ENCODE measurements at regions of chr1 and their contacts with region 1.

Region 1: GRCh38 chr1:35769759-35770446 is at the start of gene CLSPN:
- DNase-seq: peak; percentile 97
- H3K4me3 ChIP-seq: peak within 1 kb of the TSS; percentile 39 to 71 (median 51)
- H3K27ac ChIP-seq: peak within 1 kb of the TSS; percentile 76
- H3K4me1 ChIP-seq: peaks cover 6% of the 10 kb centered on the region
- H3K27me3 ChIP-seq: no peaks in the 10 kb centered on the region
- CTCF ChIP-seq: no peak
- POLR2A ChIP-seq: peak; percentile 74
- total RNA-seq, gene CLSPN: 33.2 and 39.5 TPM in 2 replicates

Region 2: DNA sequence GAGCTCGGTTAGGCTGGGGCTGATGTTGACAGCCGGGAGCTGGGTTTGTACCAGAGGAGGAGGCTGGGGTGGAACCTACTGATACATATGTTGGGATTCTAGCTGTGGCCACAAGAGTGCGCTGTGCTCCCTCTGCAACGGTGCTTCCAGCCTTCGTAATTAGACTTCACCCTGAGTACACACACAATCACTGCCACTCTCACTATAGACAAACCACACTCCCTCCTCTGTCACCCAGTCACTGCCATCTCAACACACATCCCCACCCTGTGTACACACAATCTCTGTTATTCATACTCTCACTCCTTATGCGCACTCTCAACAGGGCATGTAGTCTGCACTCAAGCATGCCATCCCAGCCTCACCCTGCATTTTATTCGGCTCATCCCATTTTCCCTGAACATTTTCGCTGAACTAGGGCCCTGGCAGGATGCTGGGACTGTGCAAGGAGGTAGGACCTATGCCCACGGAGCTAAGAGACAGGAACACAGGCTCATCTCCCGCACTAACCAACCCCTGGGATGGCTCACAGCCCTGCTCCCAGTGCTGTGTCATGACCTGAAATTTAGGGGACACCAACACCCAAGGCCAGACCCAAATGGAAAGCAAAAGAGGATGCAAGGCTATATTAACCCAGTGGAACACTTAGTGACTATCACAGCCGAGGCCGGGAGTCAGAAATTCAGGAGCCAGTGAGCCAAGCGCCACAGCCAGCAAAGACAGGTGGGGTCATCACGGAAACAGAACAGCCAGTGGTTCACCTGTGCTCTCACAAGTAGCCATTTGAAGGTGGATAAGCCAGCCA is 983.2 kb before region 1 on chr1:
- CTCF ChIA-PET with region 1: no interaction called
- POLR2A ChIA-PET with region 1: no interaction called
- dilution Hi-C with region 1: no loop called
- intact Hi-C with region 1: loop called (anchors 5 kb)
- DNase-seq: peak; percentile 79
- H3K4me3 ChIP-seq: no peak overlapping the region
- H3K27ac ChIP-seq: no peak overlapping the region
- H3K4me1 ChIP-seq: no peaks in the 10 kb centered on the region
- H3K27me3 ChIP-seq: peaks cover 18 to 19% of the 10 kb centered on the region in 2 experiments
- CTCF ChIP-seq: peak; percentile 74 to 89
- POLR2A ChIP-seq: no peak

Region 3: DNA sequence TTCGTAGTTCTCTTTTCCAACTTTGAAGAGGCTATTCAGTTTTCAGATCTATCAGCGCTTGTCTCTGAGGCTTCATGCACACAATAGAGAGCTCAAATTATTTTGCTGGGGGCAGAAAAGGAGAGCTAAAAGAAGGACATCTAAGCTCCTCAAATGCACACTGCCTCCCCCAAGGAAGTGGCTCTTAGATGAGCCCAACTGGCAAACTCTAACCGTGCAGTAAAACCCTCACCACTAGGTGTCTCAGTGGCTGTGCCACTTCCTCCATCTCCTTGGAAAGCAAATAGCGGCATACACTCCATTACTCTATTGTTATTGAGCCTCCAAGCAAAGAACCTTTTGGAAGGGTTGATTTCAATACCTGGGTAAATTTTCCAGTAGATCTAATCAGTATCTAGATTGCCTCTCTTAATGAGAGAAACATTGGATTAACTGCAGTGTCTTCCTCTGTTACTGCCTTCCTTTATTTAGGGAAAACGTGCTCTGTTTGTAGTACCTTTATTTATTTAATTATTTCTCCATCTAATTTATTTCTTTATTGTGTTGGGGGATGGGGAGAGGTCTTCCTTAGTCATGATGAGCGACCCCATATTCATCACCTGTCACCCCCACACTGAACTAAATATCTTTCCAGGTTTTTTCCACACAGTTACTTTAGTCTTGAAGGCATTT is 567.7 kb before region 1 on chr1:
- CTCF ChIA-PET with region 1: interaction called, 4 read pairs
- POLR2A ChIA-PET with region 1: no interaction called
- dilution Hi-C with region 1: no loop called
- intact Hi-C with region 1: loop called (anchors 10 kb)
- DNase-seq: peak; percentile 90
- H3K4me3 ChIP-seq: no peak overlapping the region
- H3K27ac ChIP-seq: no peak overlapping the region
- H3K4me1 ChIP-seq: no peaks in the 10 kb centered on the region
- H3K27me3 ChIP-seq: peaks cover 0 to 2% of the 10 kb centered on the region in 2 experiments
- CTCF ChIP-seq: peak; percentile 83 to 86
- POLR2A ChIP-seq: no peak

Region 4: GRCh38 chr1:35577071-35577998 is 192.6 kb before region 1 on chr1:
- CTCF ChIA-PET with region 1: interaction called, 17 read pairs
- POLR2A ChIA-PET with region 1: no interaction called
- dilution Hi-C with region 1: no loop called
- intact Hi-C with region 1: loop called (anchors 1 kb)
- DNase-seq: peak; percentile 37
- H3K4me3 ChIP-seq: peak overlapping the region in 1 of 3 experiments; percentile 9
- H3K27ac ChIP-seq: no peak overlapping the region
- H3K4me1 ChIP-seq: peaks cover 9% of the 10 kb centered on the region
- H3K27me3 ChIP-seq: peaks cover 30 to 52% of the 10 kb centered on the region in 2 experiments
- CTCF ChIP-seq: no peak
- POLR2A ChIP-seq: no peak

Region 5: DNA sequence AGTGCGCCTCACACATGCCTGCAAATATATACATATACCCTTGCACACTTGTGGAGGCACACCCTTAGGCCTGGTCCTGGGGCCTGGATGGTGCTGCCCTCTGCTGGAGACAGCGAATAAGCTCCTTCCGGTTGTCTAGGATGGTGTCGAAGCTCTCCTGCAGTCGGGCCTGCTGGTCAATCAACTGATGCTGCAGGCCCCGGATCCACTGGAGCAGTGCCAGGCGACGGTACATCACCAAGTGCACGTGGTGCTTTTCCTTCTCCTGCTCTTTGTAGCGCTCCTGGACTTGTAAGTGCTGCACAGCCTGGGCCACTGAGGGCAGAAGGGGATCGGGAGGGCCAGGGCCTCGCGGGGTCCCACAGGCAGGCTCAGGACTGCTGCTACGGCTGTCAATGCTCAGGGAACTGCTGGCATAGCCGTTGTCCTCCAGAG is 54.3 kb before region 1 on chr1:
- CTCF ChIA-PET with region 1: interaction called, 21 read pairs
- POLR2A ChIA-PET with region 1: no interaction called
- dilution Hi-C with region 1: no loop called
- intact Hi-C with region 1: no loop called
- DNase-seq: peak; percentile 65
- H3K4me3 ChIP-seq: no peak overlapping the region
- H3K27ac ChIP-seq: no peak overlapping the region
- H3K4me1 ChIP-seq: peaks cover 13% of the 10 kb centered on the region
- H3K27me3 ChIP-seq: no peaks in the 10 kb centered on the region
- CTCF ChIP-seq: peak; percentile 85 to 89
- POLR2A ChIP-seq: no peak